ENCODE measurements at regions of chr14 and their contacts with region 1.

Region 1: DNA sequence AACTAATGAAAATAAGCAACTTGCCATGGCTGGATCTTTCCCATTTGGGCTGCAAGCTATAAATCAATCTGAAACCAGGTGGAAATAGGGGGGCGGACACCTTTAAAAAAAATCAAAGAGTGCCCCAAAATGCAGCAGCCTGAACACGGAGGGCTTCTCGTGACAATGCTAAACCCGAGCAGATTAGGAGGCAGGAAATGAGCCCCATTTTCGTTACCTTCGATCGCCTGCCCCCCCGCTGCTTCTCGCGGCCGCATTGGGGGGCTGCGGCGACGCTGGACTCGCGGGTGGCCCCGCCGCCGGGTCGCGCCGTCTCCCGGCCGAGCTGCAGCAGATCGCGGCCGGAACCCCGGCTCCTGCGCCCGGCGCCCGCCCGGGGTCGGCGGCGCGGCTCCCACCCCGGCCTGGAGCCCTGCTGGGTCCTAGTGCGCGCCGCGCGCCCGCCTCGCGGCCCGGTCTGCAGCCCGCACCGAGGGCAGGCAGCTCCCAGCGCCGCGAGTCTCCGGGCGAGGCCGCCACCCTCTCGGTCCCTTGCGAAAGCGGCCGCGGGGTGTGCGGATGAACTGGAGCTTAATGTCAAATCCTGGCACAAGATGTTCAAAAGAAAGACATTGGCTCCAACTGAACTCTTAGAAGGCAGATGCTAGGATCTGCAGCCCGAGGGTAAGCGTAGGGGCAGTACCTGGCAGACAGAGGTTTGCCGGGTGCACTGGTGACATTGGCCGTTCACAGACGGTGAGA is 201.9 kb upstream of the FOXN3 start:
- DNase-seq: peak; percentile 77
- H3K4me3 Mint-ChIP-seq: peak overlapping the region; percentile 95
- H3K27ac Mint-ChIP-seq: peak overlapping the region; percentile 95
- H3K4me1 Mint-ChIP-seq: peaks cover 61% of the 10 kb centered on the region
- H3K27me3 Mint-ChIP-seq: no peaks in the 10 kb centered on the region

Region 2: GRCh38 chr14:89509891-89510290 is 109.1 kb before region 1 on chr14:
- CTCF ChIA-PET with region 1: interaction called, 3 read pairs
- POLR2A ChIA-PET with region 1: interaction called, 21 read pairs
- DNase-seq: no peak
- H3K4me3 Mint-ChIP-seq: no peak overlapping the region
- H3K27ac Mint-ChIP-seq: peak overlapping the region; percentile 95
- H3K4me1 Mint-ChIP-seq: peaks cover 59% of the 10 kb centered on the region
- H3K27me3 Mint-ChIP-seq: no peaks in the 10 kb centered on the region

Region 3: GRCh38 chr14:89641495-89642175 is 22.7 kb after region 1 on chr14:
- CTCF ChIA-PET with region 1: interaction called, 11 read pairs
- POLR2A ChIA-PET with region 1: interaction called, 113 read pairs
- DNase-seq: peak; percentile 29
- H3K4me3 Mint-ChIP-seq: peak overlapping the region; percentile 49
- H3K27ac Mint-ChIP-seq: peak overlapping the region; percentile 90
- H3K4me1 Mint-ChIP-seq: peaks cover 43% of the 10 kb centered on the region
- H3K27me3 Mint-ChIP-seq: no peaks in the 10 kb centered on the region

Region 4: GRCh38 chr14:89660166-89660565 is 41.2 kb after region 1 on chr14:
- CTCF ChIA-PET with region 1: no interaction called
- POLR2A ChIA-PET with region 1: no interaction called
- DNase-seq: no peak
- H3K4me3 Mint-ChIP-seq: no peak overlapping the region
- H3K27ac Mint-ChIP-seq: no peak overlapping the region
- H3K4me1 Mint-ChIP-seq: peaks cover 2% of the 10 kb centered on the region
- H3K27me3 Mint-ChIP-seq: no peaks in the 10 kb centered on the region

Region 5: DNA sequence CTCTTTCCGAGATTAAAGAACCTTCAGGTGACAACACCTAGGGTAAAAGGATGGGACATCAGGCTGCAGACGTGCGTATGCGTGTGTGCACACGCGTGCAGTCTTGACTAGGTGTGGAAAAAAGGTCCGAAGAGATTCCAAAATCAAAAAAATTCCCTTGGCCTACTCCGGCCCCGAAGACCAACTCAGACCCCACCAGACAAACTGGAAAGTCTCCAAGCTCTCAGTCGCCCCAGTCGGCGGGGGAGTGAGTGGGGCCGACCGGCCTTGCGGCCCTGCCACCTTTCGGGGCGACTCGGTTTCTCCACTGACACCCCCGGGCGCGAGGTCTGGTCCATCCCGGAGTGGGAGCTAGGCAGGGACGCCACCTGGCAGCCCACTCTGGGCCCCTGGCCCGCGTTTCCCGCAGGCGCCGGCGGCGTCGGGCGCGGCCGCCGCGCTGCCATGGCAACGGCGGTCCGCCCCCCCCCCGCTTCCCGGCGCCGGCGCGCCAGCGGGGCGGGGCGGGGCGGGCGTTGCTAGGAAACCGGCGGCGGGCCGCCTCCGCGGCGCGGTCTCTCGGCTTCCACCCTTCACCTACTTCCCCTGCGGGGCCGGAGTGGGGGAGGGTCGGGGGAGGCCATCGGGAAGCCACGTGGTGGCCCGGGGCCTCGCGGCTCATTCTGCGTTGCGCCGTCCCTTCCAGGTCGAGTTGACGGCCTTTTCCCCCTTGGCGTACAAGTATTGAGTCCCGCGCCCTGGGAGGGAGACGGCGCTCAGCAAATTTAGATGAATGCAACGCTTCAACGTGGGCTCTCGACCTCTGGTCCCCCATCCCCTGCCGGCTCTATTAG is 82.4 kb after region 1 on chr14:
- CTCF ChIA-PET with region 1: interaction called, 3 read pairs
- POLR2A ChIA-PET with region 1: interaction called, 14 read pairs
- DNase-seq: peak; percentile 85
- H3K4me3 Mint-ChIP-seq: peak overlapping the region; percentile 61
- H3K27ac Mint-ChIP-seq: peak overlapping the region; percentile 54
- H3K4me1 Mint-ChIP-seq: peaks cover 33% of the 10 kb centered on the region
- H3K27me3 Mint-ChIP-seq: no peaks in the 10 kb centered on the region